ENCODE measurements at regions of chr3 and their contacts with region 1.

Region 1: GRCh38 chr3:65107174-65107573 is 419.4 kb upstream of the ADAMTS9 start:
- DNase-seq: peak; percentile 72
- H3K4me3 ChIP-seq: no peak overlapping the region
- H3K27ac ChIP-seq: peak overlapping the region; percentile 51
- H3K4me1 ChIP-seq: peaks cover 16% of the 10 kb centered on the region
- H3K27me3 ChIP-seq: no peaks in the 10 kb centered on the region
- CTCF ChIP-seq: no peak
- POLR2A ChIP-seq: no peak

Region 2: GRCh38 chr3:65094723-65095122 is 12.5 kb before region 1 on chr3:
- CTCF ChIA-PET with region 1: interaction called, 18 read pairs
- POLR2A ChIA-PET with region 1: no interaction called
- dilution Hi-C with region 1: no loop called
- intact Hi-C with region 1: no loop called
- DNase-seq: no peak
- H3K4me3 ChIP-seq: no peak overlapping the region
- H3K27ac ChIP-seq: no peak overlapping the region
- H3K4me1 ChIP-seq: no peaks in the 10 kb centered on the region
- H3K27me3 ChIP-seq: no peaks in the 10 kb centered on the region
- CTCF ChIP-seq: no peak
- POLR2A ChIP-seq: no peak

Measured in endothelial cell of umbilical vein (primary cell).